ENCODE measurements at regions of chr22 and their contacts with region 1.

Region 1: GRCh38 chr22:25777870-25778269 is 35.9 kb downstream of the MYO18B start:
- DNase-seq: no peak

Region 2: GRCh38 chr22:25465949-25466348 is 311.9 kb before region 1 on chr22:
- intact Hi-C with region 1: loop called in 1 of 2 experiments (anchors 10 kb)
- DNase-seq: no peak

Region 3: DNA sequence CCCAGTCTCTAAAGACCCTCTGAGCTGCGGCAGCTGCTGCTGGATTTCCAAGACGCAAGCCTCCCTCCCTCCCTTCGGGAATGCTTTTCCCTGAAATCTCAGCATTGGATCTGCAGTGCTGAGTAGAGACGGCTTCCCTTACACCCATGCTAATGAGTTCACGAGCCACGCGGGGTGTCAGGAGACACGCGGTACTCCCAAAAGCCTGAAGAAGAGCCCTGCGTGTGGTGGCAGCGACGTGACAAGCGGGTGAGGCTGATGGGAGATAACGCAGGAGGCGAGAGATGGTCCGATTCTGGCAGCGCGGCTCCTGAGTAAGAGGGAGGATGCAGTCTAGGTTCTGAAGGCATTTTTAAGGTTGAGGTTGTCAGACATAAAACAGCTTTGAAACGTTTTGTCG is 576.8 kb after region 1 on chr22:
- intact Hi-C with region 1: loop called in 1 of 2 experiments (anchors 5 kb)
- DNase-seq: no peak